ENCODE measurements at regions of chr17 and their contacts with region 1.

Region 1: GRCh38 chr17:78397681-78398101 is 19.2 kb downstream of the PGS1 start:
- DNase-seq: peak; percentile 68 to 87
- ATAC-seq: peak; percentile 93 to 95
- H3K4me3 ChIP-seq: no peak overlapping the region
- H3K27ac ChIP-seq: peak overlapping the region; percentile 82 to 92 (median 90)
- H3K4me1 ChIP-seq: peaks cover 32 to 34% of the 10 kb centered on the region in 2 donors
- H3K27me3 ChIP-seq: no peaks in the 10 kb centered on the region
- CTCF ChIP-seq: peak in 1 of 5 experiments; percentile 9
- POLR2A ChIP-seq: peak in 1 of 2 donors; percentile 10

Region 2: GRCh38 chr17:78089576-78090281 is 308.0 kb before region 1 on chr17:
- in situ Hi-C with region 1: no loop called
- intact Hi-C with region 1: no loop called
- DNase-seq: no peak
- ATAC-seq: peak in 1 of 2 donors; percentile 51
- H3K4me3 ChIP-seq: no peak overlapping the region
- H3K27ac ChIP-seq: peak overlapping the region; percentile 42 to 76 (median 56)
- H3K4me1 ChIP-seq: peaks cover 6 to 14% of the 10 kb centered on the region in 2 donors
- H3K27me3 ChIP-seq: no peaks in the 10 kb centered on the region
- CTCF ChIP-seq: no peak
- POLR2A ChIP-seq: no peak

Region 3: GRCh38 chr17:78383725-78384471 is 13.8 kb before region 1 on chr17:
- in situ Hi-C with region 1: no loop called
- intact Hi-C with region 1: loop called (anchors 2 kb)
- DNase-seq: peak; percentile 66 to 84
- ATAC-seq: peak; percentile 75 to 87
- H3K4me3 ChIP-seq: no peak overlapping the region
- H3K27ac ChIP-seq: peak overlapping the region; percentile 78 to 87 (median 82)
- H3K4me1 ChIP-seq: peaks cover 83 to 85% of the 10 kb centered on the region in 2 donors
- H3K27me3 ChIP-seq: no peaks in the 10 kb centered on the region
- CTCF ChIP-seq: no peak
- POLR2A ChIP-seq: peak; percentile 36 to 59

Region 4: DNA sequence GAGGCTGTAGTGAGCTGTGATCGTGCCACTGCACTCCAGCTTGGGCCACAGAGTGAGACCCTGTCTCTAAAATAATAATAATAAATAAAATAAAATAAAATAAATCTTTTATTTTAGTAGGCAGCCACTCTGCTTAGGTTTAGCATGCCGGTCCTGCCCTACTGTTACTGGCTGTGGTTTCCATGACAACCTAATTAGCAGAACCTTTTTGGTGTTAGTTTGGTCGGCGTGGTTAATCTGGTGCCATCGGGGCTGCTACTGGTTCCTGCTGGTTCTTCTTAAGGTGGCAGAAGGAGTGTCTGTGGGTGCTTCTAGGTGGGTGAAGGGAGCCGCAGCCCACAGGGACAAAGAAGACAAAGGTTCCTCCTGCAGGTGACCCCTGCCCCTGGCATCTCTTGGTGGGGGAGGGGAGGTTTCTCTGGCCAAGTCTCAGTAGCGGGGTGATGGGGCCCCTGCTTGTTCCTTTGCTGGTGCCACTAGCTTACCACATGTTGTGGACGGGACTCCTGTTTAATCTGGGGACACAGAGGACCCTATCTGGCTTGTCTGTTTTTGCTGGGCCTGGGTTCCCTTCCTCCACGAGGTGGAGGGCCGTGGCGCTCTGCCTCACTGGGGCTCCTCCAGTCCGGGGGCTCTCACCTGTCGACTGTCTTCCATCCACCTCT is 1479.5 kb after region 1 on chr17:
- in situ Hi-C with region 1: no loop called
- intact Hi-C with region 1: no loop called
- DNase-seq: no peak
- ATAC-seq: no peak
- H3K4me3 ChIP-seq: no peak overlapping the region
- H3K27ac ChIP-seq: no peak overlapping the region
- H3K4me1 ChIP-seq: no peaks in the 10 kb centered on the region
- H3K27me3 ChIP-seq: peaks cover 0 to 8% (median 8%) of the 10 kb centered on the region in 3 donors
- CTCF ChIP-seq: no peak
- POLR2A ChIP-seq: no peak

Measured in gastrocnemius medialis (tissue), 4 donors.